ENCODE measurements at regions of chr22 and their contacts with region 1.

Region 1: GRCh38 chr22:33920927-33921524 is 750 bp upstream of the LARGE1 start:
- DNase-seq: peak; percentile 98
- ATAC-seq: peak; percentile 95

Region 2: GRCh38 chr22:33302049-33302545 is 618.9 kb before region 1 on chr22:
- intact Hi-C with region 1: loop called (anchors 5 kb)
- DNase-seq: peak; percentile 87
- ATAC-seq: peak; percentile 81

Region 3: GRCh38 chr22:33579448-33580093 is 341.5 kb before region 1 on chr22:
- intact Hi-C with region 1: loop called (anchors 10 kb)
- DNase-seq: no peak
- ATAC-seq: peak; percentile 89

Region 4: DNA sequence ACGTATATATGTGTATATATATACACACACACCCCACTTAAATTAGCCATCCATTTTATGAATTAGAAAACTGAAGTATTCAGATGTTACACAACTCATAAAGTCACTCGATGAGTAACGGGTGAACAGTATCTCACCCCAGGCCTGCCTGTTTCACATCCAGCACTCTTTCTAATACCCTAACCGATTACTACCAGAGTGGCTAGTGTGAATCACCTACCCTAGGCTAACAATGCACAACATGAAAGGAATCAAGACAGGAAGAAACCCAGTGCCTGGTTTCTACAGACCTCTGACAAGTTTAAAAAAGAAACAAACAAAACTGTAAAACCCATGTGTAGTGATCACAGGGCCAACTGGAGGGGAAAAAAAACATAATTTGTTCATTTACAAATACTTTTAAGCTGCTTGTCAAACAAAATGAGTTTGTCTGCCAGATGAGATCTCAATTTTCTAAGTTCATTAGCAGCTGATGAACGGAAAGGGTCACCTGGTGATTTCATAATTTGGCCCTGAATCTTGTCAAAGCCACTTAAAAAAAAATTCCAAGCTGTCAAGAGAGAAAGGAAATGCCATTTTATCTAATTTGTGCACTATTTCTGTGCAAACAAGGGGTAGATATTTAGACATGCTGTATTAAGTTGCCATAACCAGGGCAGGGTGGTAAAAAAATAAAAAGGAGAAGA is 135.6 kb before region 1 on chr22:
- intact Hi-C with region 1: loop called (anchors 5 kb)
- DNase-seq: no peak
- ATAC-seq: no peak

Region 5: DNA sequence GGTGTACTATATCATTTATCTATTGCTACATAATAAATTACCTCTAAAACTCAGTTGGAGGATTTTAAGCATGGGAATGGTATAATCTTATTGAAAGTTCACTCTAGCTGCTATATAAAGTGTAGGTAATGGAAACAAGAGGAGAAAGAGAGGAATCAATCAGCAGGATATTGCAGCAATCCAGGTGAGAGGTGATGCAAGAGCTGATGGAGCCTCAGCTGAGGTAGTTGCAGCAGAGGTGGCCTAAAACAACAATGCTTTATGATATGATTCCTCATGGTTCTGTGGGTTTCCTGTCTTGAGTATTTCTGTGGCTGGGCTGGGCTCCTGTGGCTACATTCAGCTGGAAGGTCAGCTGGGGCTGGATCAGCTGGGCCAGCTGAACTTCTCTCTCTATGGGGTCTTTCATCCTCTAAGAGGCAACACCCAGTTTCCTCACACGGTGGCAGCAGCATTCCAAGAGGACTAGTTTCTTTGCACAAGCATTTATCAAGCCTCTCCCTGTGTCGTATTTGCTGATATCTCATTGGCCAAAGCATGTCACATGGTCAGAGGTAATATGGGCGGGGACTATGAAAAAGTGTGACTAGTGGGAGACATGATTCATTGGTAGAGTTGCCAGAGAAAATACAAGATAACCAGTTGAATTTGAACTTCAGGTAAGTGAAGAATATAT is 134.6 kb after region 1 on chr22:
- intact Hi-C with region 1: no loop called
- DNase-seq: no peak
- ATAC-seq: no peak

Region 6: GRCh38 chr22:34105461-34106062 is 184.5 kb after region 1 on chr22:
- intact Hi-C with region 1: loop called (anchors 2 kb)
- DNase-seq: no peak
- ATAC-seq: peak; percentile 79

Region 7: GRCh38 chr22:34344702-34345101 is 423.7 kb after region 1 on chr22:
- intact Hi-C with region 1: loop called (anchors 10 kb)
- DNase-seq: no peak
- ATAC-seq: no peak

Measured in Right ventricle myocardium inferior (tissue), 1 donor.